ENCODE measurements at regions of chr18 and their contacts with region 1.

Region 1: GRCh38 chr18:35502052-35502451 is 4.3 kb upstream of the INO80C start:
- DNase-seq: no peak
- H3K4me3 ChIP-seq: no peak overlapping the region
- H3K27ac ChIP-seq: no peak overlapping the region
- H3K4me1 ChIP-seq: no peaks in the 10 kb centered on the region
- H3K27me3 ChIP-seq: no peaks in the 10 kb centered on the region
- CTCF ChIP-seq: no peak
- POLR2A ChIP-seq: no peak

Region 2: GRCh38 chr18:35577045-35577848 is 75.2 kb after region 1 on chr18:
- intact Hi-C with region 1: loop called (anchors 10 kb)
- DNase-seq: no peak
- H3K4me3 ChIP-seq: no peak overlapping the region
- H3K27ac ChIP-seq: no peak overlapping the region
- H3K4me1 ChIP-seq: no peaks in the 10 kb centered on the region
- H3K27me3 ChIP-seq: no peaks in the 10 kb centered on the region
- CTCF ChIP-seq: no peak
- POLR2A ChIP-seq: no peak